ENCODE measurements at regions of chr16 and their contacts with region 1.

Region 1: DNA sequence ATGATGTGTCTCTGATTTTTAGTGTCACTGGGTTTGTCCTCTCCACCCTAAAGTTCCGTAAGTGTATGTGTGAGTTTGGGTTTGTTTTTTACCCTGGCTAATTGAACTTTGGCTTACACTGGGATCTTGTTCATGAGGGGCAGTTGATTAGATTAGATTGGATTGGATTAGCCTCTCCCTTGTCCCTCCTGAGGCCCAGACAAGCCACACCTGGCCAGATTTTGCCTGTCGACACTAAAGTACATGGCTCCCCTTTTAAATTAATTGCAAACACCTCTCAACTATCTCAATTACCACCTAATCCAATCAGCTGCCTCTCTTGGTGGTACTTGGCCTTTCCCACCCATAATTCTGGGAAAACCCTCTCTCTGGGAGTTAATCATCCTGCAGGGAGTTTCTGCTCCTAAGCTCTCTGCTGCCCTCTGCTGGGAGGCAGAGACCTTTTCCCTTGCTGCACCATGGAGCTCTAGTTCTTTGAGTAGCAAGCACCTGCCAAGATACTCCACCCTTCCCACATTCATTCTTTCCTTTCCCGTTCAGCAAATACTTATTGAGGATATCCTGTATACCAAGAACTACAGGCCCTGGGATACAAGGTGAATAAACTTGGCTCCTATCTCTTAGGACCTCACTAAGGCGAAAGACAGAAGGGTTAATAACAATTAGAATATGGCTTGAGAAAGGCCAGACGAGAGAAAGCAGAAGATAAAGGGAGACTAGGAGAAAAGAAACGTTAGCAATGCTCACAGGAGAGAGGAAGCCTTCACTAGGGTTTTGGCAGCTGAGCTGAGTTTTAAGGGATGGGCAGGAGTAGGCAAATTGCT is 60.0 kb upstream of the MPHOSPH6 start:
- DNase-seq: peak; percentile 47
- ATAC-seq: peak; percentile 84
- H3K4me3 ChIP-seq: no peak overlapping the region
- H3K27ac ChIP-seq: peak overlapping the region; percentile 59; the same call in 1 of the 2 replicates
- H3K4me1 ChIP-seq: no peaks in the 10 kb centered on the region
- H3K27me3 ChIP-seq: no peaks in the 10 kb centered on the region
- CTCF ChIP-seq: peak; percentile 89

Region 2: GRCh38 chr16:82031116-82032084 is 198.6 kb before region 1 on chr16:
- CTCF ChIA-PET with region 1: no interaction called
- POLR2A ChIA-PET with region 1: no interaction called
- in situ Hi-C with region 1: no loop called
- intact Hi-C with region 1: loop called (anchors 1 kb)
- DNase-seq: no peak
- ATAC-seq: no peak
- H3K4me3 ChIP-seq: no peak overlapping the region
- H3K27ac ChIP-seq: no peak overlapping the region
- H3K4me1 ChIP-seq: peaks cover 2% of the 10 kb centered on the region; the same call in 1 of the 2 replicates
- H3K27me3 ChIP-seq: no peaks in the 10 kb centered on the region
- CTCF ChIP-seq: peak; percentile 37; the same call in 1 of the 2 replicates

Region 3: GRCh38 chr16:82133798-82134197 is 96.2 kb before region 1 on chr16:
- CTCF ChIA-PET with region 1: no interaction called
- POLR2A ChIA-PET with region 1: no interaction called
- in situ Hi-C with region 1: no loop called
- intact Hi-C with region 1: no loop called
- DNase-seq: no peak
- ATAC-seq: no peak
- H3K4me3 ChIP-seq: no peak overlapping the region
- H3K27ac ChIP-seq: peak overlapping the region; percentile 39; the same call in 1 of the 2 replicates
- H3K4me1 ChIP-seq: peaks cover 11% of the 10 kb centered on the region
- H3K27me3 ChIP-seq: no peaks in the 10 kb centered on the region
- CTCF ChIP-seq: no peak

Region 4: DNA sequence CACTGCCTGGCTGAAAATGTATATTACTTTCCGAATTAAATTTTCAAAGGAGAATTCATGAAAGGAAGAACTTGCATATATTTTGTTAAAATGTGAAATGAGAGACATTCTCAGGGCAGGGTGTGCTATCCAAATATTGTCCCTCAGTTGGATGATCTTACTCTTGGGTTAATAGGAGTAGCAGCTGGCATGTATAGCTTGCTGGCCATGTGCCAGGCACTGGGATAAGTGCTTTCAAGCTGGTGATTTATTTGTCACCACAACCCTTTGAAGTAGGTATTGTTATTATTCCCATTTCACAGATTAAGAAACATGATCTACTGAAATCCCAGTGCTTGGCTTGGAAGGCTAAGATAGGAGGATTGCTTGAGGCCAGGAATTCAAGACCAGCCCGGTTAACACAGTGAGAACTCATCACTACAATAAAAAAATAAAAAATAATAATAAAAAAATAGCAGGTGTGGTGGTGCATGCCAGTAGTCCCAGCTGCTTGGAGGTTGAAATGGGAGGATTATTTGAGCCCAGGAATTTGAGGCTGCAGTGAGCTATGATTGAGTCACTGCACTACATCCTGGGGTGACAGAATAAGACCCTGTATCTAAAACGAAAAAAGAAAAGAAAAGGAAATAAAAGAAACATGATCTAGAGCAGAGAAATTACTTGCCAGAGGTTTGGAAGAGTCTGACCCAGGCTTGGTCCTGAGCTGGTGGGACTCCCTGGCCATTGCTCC is 48.4 kb before region 1 on chr16:
- CTCF ChIA-PET with region 1: no interaction called
- POLR2A ChIA-PET with region 1: no interaction called
- in situ Hi-C with region 1: no loop called
- intact Hi-C with region 1: no loop called
- DNase-seq: no peak
- ATAC-seq: no peak
- H3K4me3 ChIP-seq: no peak overlapping the region
- H3K27ac ChIP-seq: no peak overlapping the region
- H3K4me1 ChIP-seq: no peaks in the 10 kb centered on the region
- H3K27me3 ChIP-seq: peaks cover 5% of the 10 kb centered on the region
- CTCF ChIP-seq: no peak